ENCODE measurements at regions of chr5 and their contacts with region 1.

Region 1: GRCh38 chr5:142713121-142713706 is 27.3 kb upstream of the FGF1 start:
- DNase-seq: peak; percentile 75
- H3K4me3 Mint-ChIP-seq: peak overlapping the region; percentile 71
- H3K27ac Mint-ChIP-seq: no peak overlapping the region
- H3K4me1 Mint-ChIP-seq: peaks cover 13% of the 10 kb centered on the region
- H3K27me3 Mint-ChIP-seq: peaks cover 11% of the 10 kb centered on the region

Region 2: DNA sequence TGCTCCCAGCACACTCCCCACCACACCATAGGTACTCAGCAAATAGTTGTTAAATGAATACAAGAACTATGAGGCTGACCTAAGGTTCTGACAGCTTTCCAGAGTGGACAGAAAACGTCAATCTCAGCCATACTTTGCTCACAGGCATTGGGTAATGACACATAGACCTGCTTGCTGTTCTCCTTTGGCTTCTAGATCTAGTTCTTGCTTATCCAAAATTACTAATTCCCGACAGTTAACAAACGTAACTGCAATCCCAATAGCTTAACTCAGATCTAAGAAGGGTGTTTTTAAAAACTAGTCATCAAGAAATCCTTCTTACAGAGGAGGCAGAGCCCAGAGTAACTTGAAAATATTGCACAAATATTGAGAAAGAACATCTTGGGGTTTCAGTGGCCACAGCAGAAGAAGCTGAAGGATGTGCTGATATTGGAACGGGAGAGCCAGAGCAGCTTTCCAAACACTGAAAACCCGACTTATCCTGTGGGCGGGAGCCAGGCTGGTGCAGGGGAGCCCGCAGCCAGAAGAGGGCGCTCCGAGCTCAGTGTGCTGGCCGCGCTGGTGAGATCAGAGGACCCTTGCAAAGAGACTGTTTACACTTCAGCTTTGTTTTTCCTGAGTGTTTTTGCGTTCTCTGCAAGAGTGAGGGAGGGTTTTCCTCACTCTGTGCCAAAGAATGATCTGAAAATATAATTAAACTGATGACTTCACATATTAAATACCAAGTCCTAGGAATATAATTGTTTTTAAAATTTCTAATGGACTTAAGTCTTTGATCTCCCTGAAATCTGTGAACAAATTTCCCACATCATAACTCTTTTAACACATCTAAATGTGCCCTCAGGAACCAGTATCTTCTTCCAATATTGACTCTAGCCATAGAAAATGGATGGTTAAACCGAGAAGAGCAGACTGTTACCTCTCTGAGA is 57.6 kb before region 1 on chr5:
- intact Hi-C with region 1: loop called (anchors 5 kb)
- DNase-seq: peak; percentile 45
- H3K4me3 Mint-ChIP-seq: no peak overlapping the region
- H3K27ac Mint-ChIP-seq: no peak overlapping the region
- H3K4me1 Mint-ChIP-seq: no peaks in the 10 kb centered on the region
- H3K27me3 Mint-ChIP-seq: peaks cover 13% of the 10 kb centered on the region

Region 3: GRCh38 chr5:142872795-142873194 is 159.6 kb after region 1 on chr5:
- intact Hi-C with region 1: loop called (anchors 1 kb)
- DNase-seq: no peak
- H3K4me3 Mint-ChIP-seq: no peak overlapping the region
- H3K27ac Mint-ChIP-seq: no peak overlapping the region
- H3K4me1 Mint-ChIP-seq: peaks cover 13% of the 10 kb centered on the region
- H3K27me3 Mint-ChIP-seq: peaks cover 3% of the 10 kb centered on the region

Region 4: GRCh38 chr5:142888469-142889085 is 175.4 kb after region 1 on chr5:
- intact Hi-C with region 1: loop called (anchors 1 kb)
- DNase-seq: no peak
- H3K4me3 Mint-ChIP-seq: no peak overlapping the region
- H3K27ac Mint-ChIP-seq: no peak overlapping the region
- H3K4me1 Mint-ChIP-seq: peaks cover 19% of the 10 kb centered on the region
- H3K27me3 Mint-ChIP-seq: no peaks in the 10 kb centered on the region

Region 5: DNA sequence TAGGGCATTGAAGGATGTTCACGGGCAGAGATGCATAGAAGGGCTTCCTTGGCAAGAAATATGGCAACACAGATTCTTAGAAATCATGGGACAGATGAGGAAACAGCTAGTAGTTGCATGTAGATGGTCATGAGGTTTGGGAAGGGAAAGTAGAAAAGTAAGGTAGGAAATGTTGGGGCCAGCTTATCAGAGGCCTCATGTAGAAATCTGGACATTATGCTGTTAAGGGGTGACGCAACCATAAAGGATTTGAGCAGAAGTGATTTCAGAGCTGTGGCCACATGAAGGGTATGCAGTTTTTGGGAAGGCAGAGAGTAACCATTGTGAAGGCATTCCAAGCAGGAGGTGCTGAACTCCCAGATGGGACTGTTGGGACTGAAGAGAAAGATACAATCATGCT is 281.0 kb after region 1 on chr5:
- intact Hi-C with region 1: no loop called
- DNase-seq: no peak
- H3K4me3 Mint-ChIP-seq: no peak overlapping the region
- H3K27ac Mint-ChIP-seq: no peak overlapping the region
- H3K4me1 Mint-ChIP-seq: peaks cover 58% of the 10 kb centered on the region
- H3K27me3 Mint-ChIP-seq: no peaks in the 10 kb centered on the region